SK-MEL-5 (cell line): ENCODE measurements at regions of chr7 and their contacts with region 1.

Region 1: GRCh38 chr7:36986429-36987362 is 262.4 kb upstream of the AOAH start:
- DNase-seq: peak; percentile 78

Region 2: DNA sequence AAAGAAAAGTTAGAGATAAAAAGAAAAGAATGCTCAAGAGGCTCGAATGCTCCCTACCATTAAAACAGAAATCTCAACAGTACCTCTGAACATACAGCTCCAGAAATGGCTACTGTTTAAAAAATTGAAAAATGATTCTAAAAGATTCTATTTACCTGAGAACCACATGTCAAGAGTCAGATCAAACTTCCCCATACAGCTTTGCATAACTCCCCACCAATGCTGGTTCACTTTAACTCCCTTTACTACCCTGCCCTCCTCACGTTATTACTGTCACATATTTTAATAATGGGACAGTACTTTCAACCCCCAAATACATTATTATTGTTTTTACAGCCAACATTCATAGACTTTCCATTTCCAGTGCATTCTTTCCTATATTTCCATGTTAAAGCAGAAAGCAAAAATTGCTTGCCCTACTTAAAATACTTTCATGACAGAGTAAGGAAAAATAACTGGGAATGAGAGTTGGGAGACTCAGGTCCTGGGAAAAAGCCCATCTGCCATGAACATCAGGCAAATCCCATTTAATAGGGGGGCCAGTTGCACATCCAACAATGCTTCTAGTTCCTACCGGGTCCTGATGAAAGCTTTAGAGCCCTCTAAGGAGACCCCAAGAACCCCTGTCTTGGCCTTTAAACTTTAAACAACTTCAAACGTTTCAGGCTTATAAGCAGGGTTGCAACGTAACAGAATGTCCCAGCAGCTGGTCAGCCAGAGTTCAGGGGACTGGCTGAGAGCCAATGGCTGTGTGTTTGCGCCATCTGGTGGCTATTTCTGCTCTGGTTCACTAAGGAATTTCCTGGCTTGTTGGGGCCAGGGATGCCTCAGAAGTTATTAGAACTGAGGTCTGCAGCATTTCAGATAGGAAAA is 214.5 kb after region 1 on chr7:
- in situ Hi-C with region 1: loop called (anchors 25 kb)
- DNase-seq: peak; percentile 85